ENCODE measurements at regions of chr14 and their contacts with region 1.

Region 1: GRCh38 chr14:61280526-61281185 is 482 bp downstream of the TMEM30B start:
- DNase-seq: peak; percentile 34
- ATAC-seq: peak; percentile 82
- H3K4me3 ChIP-seq: peak overlapping the region; percentile 22
- H3K27ac ChIP-seq: no peak overlapping the region
- H3K4me1 ChIP-seq: no peaks in the 10 kb centered on the region
- H3K27me3 ChIP-seq: peaks cover 25% of the 10 kb centered on the region
- CTCF ChIP-seq: peak; percentile 28
- POLR2A ChIP-seq: no peak
- RAD21 ChIP-seq: no peak

Region 2: GRCh38 chr14:60800409-60800808 is 480.2 kb before region 1 on chr14:
- CTCF ChIA-PET with region 1: no interaction called
- POLR2A ChIA-PET with region 1: no interaction called
- dilution Hi-C with region 1: no loop called
- in situ Hi-C with region 1: no loop called
- intact Hi-C with region 1: no loop called
- DNase-seq: no peak
- ATAC-seq: no peak
- H3K4me3 ChIP-seq: no peak overlapping the region
- H3K27ac ChIP-seq: no peak overlapping the region
- H3K4me1 ChIP-seq: no peaks in the 10 kb centered on the region
- H3K27me3 ChIP-seq: no peaks in the 10 kb centered on the region
- CTCF ChIP-seq: no peak
- POLR2A ChIP-seq: no peak
- RAD21 ChIP-seq: no peak

Region 3: GRCh38 chr14:60812987-60813386 is 467.7 kb before region 1 on chr14:
- CTCF ChIA-PET with region 1: no interaction called
- POLR2A ChIA-PET with region 1: no interaction called
- dilution Hi-C with region 1: no loop called
- in situ Hi-C with region 1: no loop called
- intact Hi-C with region 1: no loop called
- DNase-seq: no peak
- ATAC-seq: no peak
- H3K4me3 ChIP-seq: no peak overlapping the region
- H3K27ac ChIP-seq: no peak overlapping the region
- H3K4me1 ChIP-seq: peaks cover 3% of the 10 kb centered on the region; the same call in 1 of the 2 replicates
- H3K27me3 ChIP-seq: no peaks in the 10 kb centered on the region
- CTCF ChIP-seq: no peak
- POLR2A ChIP-seq: no peak
- RAD21 ChIP-seq: no peak

Region 4: DNA sequence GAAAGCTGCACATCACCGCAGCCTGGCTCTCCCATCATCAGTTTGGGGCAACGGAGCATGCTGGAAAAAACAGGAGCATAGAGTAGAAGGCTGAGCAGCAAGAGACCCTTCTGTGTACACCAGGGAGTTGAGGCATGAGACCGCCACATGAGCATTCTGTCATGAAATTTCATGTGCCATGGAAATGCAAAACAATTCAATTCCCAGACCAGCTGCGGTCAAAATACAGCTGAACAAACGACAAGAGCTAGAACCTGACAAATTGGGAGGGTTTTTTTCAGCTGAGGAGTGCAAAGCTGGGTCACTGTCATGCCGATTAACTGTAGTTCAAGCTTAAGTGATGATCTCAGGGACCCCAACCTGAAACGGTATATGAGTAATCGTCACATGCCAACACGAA is 36.6 kb before region 1 on chr14:
- CTCF ChIA-PET with region 1: no interaction called
- POLR2A ChIA-PET with region 1: interaction called, 14 read pairs
- dilution Hi-C with region 1: no loop called
- in situ Hi-C with region 1: no loop called
- intact Hi-C with region 1: no loop called
- DNase-seq: no peak
- ATAC-seq: no peak
- H3K4me3 ChIP-seq: no peak overlapping the region
- H3K27ac ChIP-seq: no peak overlapping the region
- H3K4me1 ChIP-seq: peaks cover 2% of the 10 kb centered on the region
- H3K27me3 ChIP-seq: no peaks in the 10 kb centered on the region
- CTCF ChIP-seq: no peak
- POLR2A ChIP-seq: no peak
- RAD21 ChIP-seq: no peak

Measured in IMR-90 (cell line).